Endothelial cell of umbilical vein (primary cell): ENCODE measurements at regions of chr11 and their contacts with region 1.

Region 1: GRCh38 chr11:65382033-65382807 is at the start of gene SLC25A45:
- DNase-seq: peak; percentile 99
- H3K4me3 ChIP-seq: peak within 1 kb of the TSS in 1 of 3 experiments; percentile 20
- H3K27ac ChIP-seq: peak within 1 kb of the TSS; percentile 95
- H3K4me1 ChIP-seq: peaks cover 41% of the 10 kb centered on the region
- H3K27me3 ChIP-seq: no peaks in the 10 kb centered on the region
- CTCF ChIP-seq: peak; percentile 89 to 90
- POLR2A ChIP-seq: peak; percentile 84
- total RNA-seq, gene SLC25A45: 3.1 and 4.8 TPM in 2 replicates

Region 2: DNA sequence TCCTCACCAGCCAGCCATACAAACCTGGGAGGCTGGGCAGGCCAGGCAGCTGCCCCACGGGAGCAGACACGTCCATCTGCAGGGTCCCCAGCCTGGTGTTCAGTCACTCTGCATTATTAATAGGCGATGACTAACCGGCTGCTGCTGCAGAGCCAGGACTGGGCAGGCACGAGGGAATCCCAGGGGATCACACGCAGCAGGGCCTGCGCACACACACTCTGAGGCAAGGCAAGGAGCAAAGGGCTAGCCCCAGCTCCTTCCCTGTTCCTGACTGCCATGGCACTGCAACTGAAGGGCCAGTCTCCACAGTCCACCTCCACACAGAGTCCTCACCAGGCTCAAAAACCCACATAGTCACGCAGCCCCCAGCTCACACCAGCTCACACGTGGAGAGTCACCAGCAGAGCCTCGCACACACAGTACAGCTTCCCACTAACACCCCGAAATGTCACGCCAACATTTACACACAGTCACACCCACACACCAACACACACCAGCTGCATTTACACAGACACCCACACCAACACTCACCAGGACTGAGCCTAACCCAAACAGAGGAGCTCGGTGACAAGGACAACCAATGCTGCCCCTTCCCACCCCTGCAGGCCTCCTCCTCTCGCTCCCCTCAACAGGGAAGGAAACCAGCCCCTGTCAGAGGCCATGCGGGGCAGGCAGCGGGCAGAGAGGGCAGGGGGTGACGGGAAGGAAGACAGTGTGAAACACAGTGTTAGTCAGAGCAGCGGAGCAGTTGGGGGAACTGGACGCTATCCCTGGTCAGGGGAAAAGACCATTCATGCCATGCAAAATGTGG is 706.6 kb before region 1 on chr11:
- CTCF ChIA-PET with region 1: no interaction called
- POLR2A ChIA-PET with region 1: no interaction called
- dilution Hi-C with region 1: no loop called
- intact Hi-C with region 1: no loop called
- DNase-seq: no peak
- H3K4me3 ChIP-seq: no peak overlapping the region
- H3K27ac ChIP-seq: no peak overlapping the region
- H3K4me1 ChIP-seq: no peaks in the 10 kb centered on the region
- H3K27me3 ChIP-seq: peaks cover 38 to 42% of the 10 kb centered on the region in 2 experiments
- CTCF ChIP-seq: no peak
- POLR2A ChIP-seq: no peak

Region 3: DNA sequence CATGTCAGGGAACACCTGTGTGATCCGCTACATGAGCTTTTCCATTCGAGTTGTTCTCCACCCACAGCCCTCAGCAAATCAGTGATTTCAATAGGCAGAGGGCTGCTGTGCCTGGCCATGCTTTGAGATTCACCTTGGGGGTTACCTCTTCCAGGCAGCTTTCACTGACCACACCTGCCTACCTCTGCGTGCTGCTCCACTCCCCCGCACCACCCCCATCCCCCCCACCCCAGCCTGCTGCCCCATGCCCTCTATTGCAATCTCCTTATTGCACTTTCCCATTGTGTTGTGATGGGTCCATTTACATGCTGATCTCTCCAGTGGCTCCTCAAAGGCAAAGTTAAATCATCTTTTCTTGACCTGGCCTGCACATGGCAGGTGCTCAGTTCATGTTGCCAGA is 138.4 kb before region 1 on chr11:
- CTCF ChIA-PET with region 1: no interaction called
- POLR2A ChIA-PET with region 1: no interaction called
- dilution Hi-C with region 1: no loop called
- intact Hi-C with region 1: no loop called
- DNase-seq: no peak
- H3K4me3 ChIP-seq: no peak overlapping the region
- H3K27ac ChIP-seq: no peak overlapping the region
- H3K4me1 ChIP-seq: no peaks in the 10 kb centered on the region
- H3K27me3 ChIP-seq: no peaks in the 10 kb centered on the region
- CTCF ChIP-seq: no peak
- POLR2A ChIP-seq: no peak

Region 4: GRCh38 chr11:65329944-65330403 is 52.2 kb before region 1 on chr11:
- CTCF ChIA-PET with region 1: no interaction called
- POLR2A ChIA-PET with region 1: no interaction called
- dilution Hi-C with region 1: no loop called
- intact Hi-C with region 1: no loop called
- DNase-seq: peak; percentile 88
- H3K4me3 ChIP-seq: no peak overlapping the region
- H3K27ac ChIP-seq: peak overlapping the region; percentile 20
- H3K4me1 ChIP-seq: peaks cover 14% of the 10 kb centered on the region
- H3K27me3 ChIP-seq: no peaks in the 10 kb centered on the region
- CTCF ChIP-seq: peak; percentile 67 to 70
- POLR2A ChIP-seq: no peak

Region 5: GRCh38 chr11:65366340-65366773 is 15.9 kb before region 1 on chr11:
- CTCF ChIA-PET with region 1: interaction called, 5 read pairs
- POLR2A ChIA-PET with region 1: no interaction called
- dilution Hi-C with region 1: no loop called
- intact Hi-C with region 1: loop called (anchors 1 kb)
- DNase-seq: peak; percentile 78
- H3K4me3 ChIP-seq: no peak overlapping the region
- H3K27ac ChIP-seq: no peak overlapping the region
- H3K4me1 ChIP-seq: peaks cover 7% of the 10 kb centered on the region
- H3K27me3 ChIP-seq: no peaks in the 10 kb centered on the region
- CTCF ChIP-seq: peak; percentile 49 to 66
- POLR2A ChIP-seq: no peak

Region 6: GRCh38 chr11:65404638-65405339 is 22.6 kb after region 1 on chr11:
- CTCF ChIA-PET with region 1: interaction called, 10 read pairs
- POLR2A ChIA-PET with region 1: interaction called, 3 read pairs
- dilution Hi-C with region 1: no loop called
- intact Hi-C with region 1: no loop called
- DNase-seq: no peak
- H3K4me3 ChIP-seq: no peak overlapping the region
- H3K27ac ChIP-seq: no peak overlapping the region
- H3K4me1 ChIP-seq: no peaks in the 10 kb centered on the region
- H3K27me3 ChIP-seq: no peaks in the 10 kb centered on the region
- CTCF ChIP-seq: no peak
- POLR2A ChIP-seq: no peak

Region 7: GRCh38 chr11:65454696-65455456 is 72.7 kb after region 1 on chr11:
- CTCF ChIA-PET with region 1: no interaction called
- POLR2A ChIA-PET with region 1: no interaction called
- dilution Hi-C with region 1: no loop called
- intact Hi-C with region 1: no loop called
- DNase-seq: peak; percentile 93
- H3K4me3 ChIP-seq: peak overlapping the region; percentile 27 to 60 (median 53)
- H3K27ac ChIP-seq: peak overlapping the region; percentile 51
- H3K4me1 ChIP-seq: no peaks in the 10 kb centered on the region
- H3K27me3 ChIP-seq: no peaks in the 10 kb centered on the region
- CTCF ChIP-seq: peak in 1 of 2 donors; percentile 37
- POLR2A ChIP-seq: peak; percentile 94

Region 8: DNA sequence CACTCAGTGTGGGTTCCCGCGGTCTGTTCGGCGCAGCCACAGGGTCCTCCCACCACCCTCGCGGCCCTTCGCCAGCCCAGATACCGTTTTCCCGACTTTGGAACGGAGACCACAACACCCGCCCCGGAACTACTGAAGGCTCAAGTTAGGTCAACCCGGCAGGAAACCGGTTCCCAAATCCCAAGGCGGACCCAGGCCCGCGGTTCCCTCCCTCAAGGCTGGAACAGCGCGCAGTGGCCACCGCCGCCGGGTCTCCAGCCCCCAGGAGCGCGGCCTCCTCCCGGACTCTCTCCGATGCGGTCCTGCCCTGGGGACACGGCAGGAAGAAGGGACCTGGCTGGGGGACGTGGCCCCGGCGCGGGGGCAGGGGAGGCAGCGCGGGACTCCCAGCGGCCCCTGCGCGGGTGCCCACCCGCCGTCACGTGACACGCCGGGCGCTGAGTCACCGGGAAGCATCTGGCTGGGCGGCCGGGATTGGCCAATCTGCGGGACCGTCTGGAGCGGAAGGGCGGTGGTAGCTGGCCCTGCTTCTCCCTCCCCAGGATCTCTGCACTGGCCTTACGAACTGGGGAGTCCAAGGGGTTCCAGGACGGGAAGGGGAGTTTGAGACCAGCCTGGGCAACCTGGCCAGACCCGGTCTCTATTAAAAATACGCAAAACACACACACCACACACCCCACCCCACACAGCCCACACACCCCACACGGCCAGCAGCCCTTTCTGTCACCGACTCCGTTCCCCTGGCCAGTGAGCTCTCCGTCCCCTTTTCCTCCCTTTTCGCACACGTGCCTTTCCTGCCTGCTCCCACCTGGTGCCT is 95.1 kb after region 1 on chr11:
- CTCF ChIA-PET with region 1: no interaction called
- POLR2A ChIA-PET with region 1: interaction called, 4 read pairs
- dilution Hi-C with region 1: no loop called
- intact Hi-C with region 1: loop called (anchors 1 kb)
- DNase-seq: peak; percentile 94
- H3K4me3 ChIP-seq: peak overlapping the region; percentile 35 to 56 (median 54)
- H3K27ac ChIP-seq: peak overlapping the region; percentile 88
- H3K4me1 ChIP-seq: peaks cover 26% of the 10 kb centered on the region
- H3K27me3 ChIP-seq: no peaks in the 10 kb centered on the region
- CTCF ChIP-seq: no peak
- POLR2A ChIP-seq: peak; percentile 95

Region 9: DNA sequence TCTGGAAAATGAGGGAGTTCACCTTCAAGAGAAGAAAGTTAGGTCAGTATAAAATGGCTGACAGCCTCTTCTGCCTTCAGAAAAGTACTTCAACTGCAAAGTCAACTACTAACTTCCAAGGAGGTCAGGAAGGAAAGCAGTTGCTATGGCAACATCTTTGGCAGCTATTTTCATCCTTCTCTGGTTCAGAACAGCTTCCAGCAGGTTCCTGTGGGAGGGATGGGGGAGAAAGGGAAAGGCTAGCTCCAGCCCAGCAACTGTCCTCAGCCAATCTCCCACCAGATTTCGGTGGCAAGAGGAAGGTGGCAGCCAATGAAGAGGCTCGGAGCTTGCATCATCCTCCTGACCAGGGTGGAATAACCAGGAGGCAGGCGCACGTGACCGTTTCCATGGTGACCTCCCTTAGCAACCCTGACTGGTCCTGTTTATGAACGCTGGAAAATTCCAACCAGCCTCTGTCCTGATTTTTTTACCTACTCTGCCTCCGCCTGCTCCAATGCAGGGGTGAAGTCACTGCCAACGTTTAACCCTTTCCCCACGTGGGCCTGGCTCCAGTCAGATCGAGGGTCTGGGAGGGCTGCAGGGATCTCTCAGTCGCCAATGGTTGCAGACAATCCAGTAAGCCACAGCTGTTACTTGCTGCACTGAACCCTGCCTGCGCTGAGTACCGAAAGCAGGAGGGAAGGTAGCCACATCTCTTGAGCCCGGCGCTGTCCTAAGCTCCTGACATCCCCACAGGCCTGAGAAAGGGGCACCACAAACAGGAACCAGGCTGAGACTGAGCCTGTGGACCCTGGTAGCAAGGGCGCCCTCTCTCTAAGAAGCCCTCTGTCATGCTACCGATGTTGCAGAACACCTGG is 105.4 kb after region 1 on chr11:
- CTCF ChIA-PET with region 1: no interaction called
- POLR2A ChIA-PET with region 1: interaction called, 12 read pairs
- dilution Hi-C with region 1: no loop called
- intact Hi-C with region 1: no loop called
- DNase-seq: peak; percentile 100
- H3K4me3 ChIP-seq: no peak overlapping the region
- H3K27ac ChIP-seq: peak overlapping the region; percentile 81
- H3K4me1 ChIP-seq: peaks cover 59% of the 10 kb centered on the region
- H3K27me3 ChIP-seq: no peaks in the 10 kb centered on the region
- CTCF ChIP-seq: no peak
- POLR2A ChIP-seq: peak; percentile 49